HEK293 (cell line): ENCODE measurements at regions of chr9 and their contacts with region 1.

Region 1: DNA sequence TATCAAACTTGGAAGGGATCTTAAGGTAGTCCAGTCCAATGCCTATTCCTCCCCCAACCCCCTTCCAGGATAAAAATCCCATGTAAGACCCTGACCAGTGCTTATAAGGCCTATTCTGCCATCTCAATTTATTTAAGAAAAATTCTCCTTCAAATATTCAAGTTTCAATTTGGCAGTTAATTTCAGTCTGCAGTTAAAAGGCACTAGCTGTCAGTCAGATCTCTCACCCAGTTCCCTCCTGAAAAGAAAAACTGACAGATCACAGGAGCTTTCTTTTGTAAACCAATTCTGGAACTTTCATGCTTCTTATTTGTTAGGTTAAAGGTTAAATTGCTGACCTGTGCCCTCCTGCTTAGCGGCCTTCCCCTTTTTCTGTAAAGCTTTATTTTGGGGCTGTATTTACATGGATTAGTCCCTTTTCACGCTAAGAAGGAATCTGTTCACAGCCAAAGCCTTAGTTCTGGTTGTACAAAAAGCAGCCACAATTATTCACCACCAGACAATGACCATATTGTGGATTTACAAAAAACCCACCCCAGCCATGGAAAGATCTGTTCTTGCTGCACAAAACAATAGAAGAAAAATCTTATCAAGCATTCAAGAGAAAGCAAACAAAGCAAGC is 68.7 kb downstream of the DENND1A start:
- H3K4me3 ChIP-seq: no peak overlapping the region
- H3K27ac ChIP-seq: no peak overlapping the region
- H3K4me1 ChIP-seq: peaks cover 7% of the 10 kb centered on the region
- CTCF ChIP-seq: no peak

Region 2: GRCh38 chr9:123761905-123762605 is 99.1 kb before region 1 on chr9:
- CTCF ChIA-PET with region 1: interaction called, 10 read pairs
- POLR2A ChIA-PET with region 1: no interaction called
- H3K4me3 ChIP-seq: no peak overlapping the region
- H3K27ac ChIP-seq: no peak overlapping the region
- H3K4me1 ChIP-seq: 0 out of 2 replicates have a peak, but pooled peaks cover 4% of the 10 kb centered on the region
- CTCF ChIP-seq: no peak

Region 3: GRCh38 chr9:123796618-123797484 is 64.3 kb before region 1 on chr9:
- CTCF ChIA-PET with region 1: no interaction called
- POLR2A ChIA-PET with region 1: no interaction called
- H3K4me3 ChIP-seq: no peak overlapping the region
- H3K27ac ChIP-seq: no peak overlapping the region
- H3K4me1 ChIP-seq: peaks cover 3% of the 10 kb centered on the region; the same call in 1 of the 2 replicates
- CTCF ChIP-seq: no peak

Region 4: GRCh38 chr9:123883634-123884033 is 22.4 kb after region 1 on chr9:
- CTCF ChIA-PET with region 1: no interaction called
- POLR2A ChIA-PET with region 1: no interaction called
- H3K4me3 ChIP-seq: no peak overlapping the region
- H3K27ac ChIP-seq: no peak overlapping the region
- H3K4me1 ChIP-seq: no peaks in the 10 kb centered on the region
- CTCF ChIP-seq: no peak